ENCODE measurements at regions of chr14 and their contacts with region 1.

Region 1: GRCh38 chr14:50943943-50944646 is at the start of gene PYGL:
- DNase-seq: peak in 1 of 2 donors; percentile 84
- H3K4me3 ChIP-seq: peak within 1 kb of the TSS; percentile 76 to 84
- H3K27ac ChIP-seq: peak within 1 kb of the TSS; percentile 64 to 84
- H3K4me1 ChIP-seq: no peaks in the 10 kb centered on the region
- H3K27me3 ChIP-seq: no peaks in the 10 kb centered on the region
- CTCF ChIP-seq: no peak
- total RNA-seq, gene PYGL: 13.8 TPM

Region 2: GRCh38 chr14:51239813-51240803 is 296.0 kb after region 1 on chr14 and contains the start of gene TMX1:
- intact Hi-C with region 1: loop called (anchors 5 kb)
- DNase-seq: peak; percentile 92 to 98
- H3K4me3 ChIP-seq: peak within 1 kb of the TSS; percentile 93 to 96
- H3K27ac ChIP-seq: peak within 1 kb of the TSS; percentile 84 to 88
- H3K4me1 ChIP-seq: peaks cover 0 to 5% of the 10 kb centered on the region in 2 donors
- H3K27me3 ChIP-seq: no peaks in the 10 kb centered on the region
- CTCF ChIP-seq: no peak
- total RNA-seq, gene TMX1: 5.1 TPM